Gastrocnemius medialis (tissue), 4 donors: ENCODE measurements at regions of chr21 and their contacts with region 1.

Region 1: GRCh38 chr21:35400233-35400957 is 351.3 kb upstream of the RUNX1 start:
- DNase-seq: peak in 1 of 2 donors; percentile 8
- ATAC-seq: peak; percentile 93 to 98
- H3K4me3 ChIP-seq: no peak overlapping the region
- H3K27ac ChIP-seq: no peak overlapping the region
- H3K4me1 ChIP-seq: peaks cover 0 to 14% of the 10 kb centered on the region in 2 donors
- H3K27me3 ChIP-seq: no peaks in the 10 kb centered on the region
- CTCF ChIP-seq: peak; percentile 54 to 71 (median 59)
- POLR2A ChIP-seq: no peak

Region 2: DNA sequence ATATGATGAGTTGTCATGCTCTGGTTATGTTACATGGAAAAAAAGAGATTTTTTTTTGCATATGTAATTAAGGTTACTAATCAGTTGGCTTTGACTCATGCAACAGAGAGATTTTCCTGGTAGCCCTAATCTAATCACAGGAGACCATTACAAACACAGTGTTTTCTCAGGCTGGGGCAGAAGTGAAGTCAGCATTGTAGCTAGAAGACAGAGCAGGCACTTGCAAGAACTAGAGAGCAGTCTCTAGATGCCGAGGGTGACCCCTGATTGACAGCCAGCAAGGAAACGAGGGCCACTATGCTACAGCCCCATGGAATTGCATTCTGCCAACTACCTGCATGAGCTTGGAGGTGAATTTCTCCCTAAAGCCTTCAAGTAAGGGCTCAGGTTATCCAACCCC is 502.6 kb before region 1 on chr21:
- in situ Hi-C with region 1: loop called (anchors 5 to 25 kb)
- intact Hi-C with region 1: no loop called
- DNase-seq: no peak
- ATAC-seq: no peak
- H3K4me3 ChIP-seq: no peak overlapping the region
- H3K27ac ChIP-seq: no peak overlapping the region
- H3K4me1 ChIP-seq: no peaks in the 10 kb centered on the region
- H3K27me3 ChIP-seq: peaks cover 0 to 7% (median 4%) of the 10 kb centered on the region in 3 donors
- CTCF ChIP-seq: no peak
- POLR2A ChIP-seq: no peak